A673 (cell line): ENCODE measurements at regions of chr6 and their contacts with region 1.

Region 1: GRCh38 chr6:157281570-157281969 is 41.7 kb downstream of the TMEM242 start:
- DNase-seq: peak; percentile 35
- H3K4me3 ChIP-seq: no peak overlapping the region
- H3K27ac ChIP-seq: no peak overlapping the region
- H3K4me1 ChIP-seq: no peaks in the 10 kb centered on the region
- H3K27me3 ChIP-seq: no peaks in the 10 kb centered on the region
- CTCF ChIP-seq: peak; percentile 46

Region 2: DNA sequence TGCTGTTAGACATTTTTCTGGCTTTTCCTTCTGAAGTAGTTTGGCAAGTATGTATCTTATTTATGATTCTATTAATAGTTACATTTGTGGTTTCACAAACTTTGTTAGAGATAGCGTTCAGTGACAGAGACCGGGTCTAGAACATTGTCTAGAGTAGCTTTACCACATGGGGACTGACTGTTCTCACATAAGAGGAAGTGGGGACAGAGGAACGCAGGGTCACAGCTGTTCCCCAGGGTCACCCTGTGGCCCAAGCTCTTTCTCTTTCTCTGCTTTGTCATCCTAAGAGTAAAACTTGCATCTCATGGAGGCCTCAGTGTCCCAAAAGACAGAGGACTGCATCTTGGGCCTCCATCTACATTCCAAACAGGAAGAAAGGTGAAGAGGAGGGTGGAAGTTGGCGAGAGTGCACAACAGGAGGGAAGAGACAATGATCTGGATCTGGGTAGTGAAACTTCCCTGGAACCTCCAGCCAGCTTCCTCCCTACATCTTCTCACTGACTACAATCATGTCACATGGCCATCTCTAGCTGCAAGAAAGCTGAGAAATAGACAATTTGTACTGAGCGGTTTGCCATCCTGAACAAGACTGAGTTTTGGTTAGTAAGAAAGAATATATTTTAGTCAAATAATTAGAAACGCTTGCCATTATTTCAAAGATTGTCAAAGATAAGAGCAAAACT is 1150.2 kb before region 1 on chr6:
- CTCF ChIA-PET with region 1: no interaction called
- POLR2A ChIA-PET with region 1: no interaction called
- intact Hi-C with region 1: no loop called
- DNase-seq: no peak
- H3K4me3 ChIP-seq: no peak overlapping the region
- H3K27ac ChIP-seq: no peak overlapping the region
- H3K4me1 ChIP-seq: no peaks in the 10 kb centered on the region
- H3K27me3 ChIP-seq: no peaks in the 10 kb centered on the region
- CTCF ChIP-seq: no peak

Region 3: DNA sequence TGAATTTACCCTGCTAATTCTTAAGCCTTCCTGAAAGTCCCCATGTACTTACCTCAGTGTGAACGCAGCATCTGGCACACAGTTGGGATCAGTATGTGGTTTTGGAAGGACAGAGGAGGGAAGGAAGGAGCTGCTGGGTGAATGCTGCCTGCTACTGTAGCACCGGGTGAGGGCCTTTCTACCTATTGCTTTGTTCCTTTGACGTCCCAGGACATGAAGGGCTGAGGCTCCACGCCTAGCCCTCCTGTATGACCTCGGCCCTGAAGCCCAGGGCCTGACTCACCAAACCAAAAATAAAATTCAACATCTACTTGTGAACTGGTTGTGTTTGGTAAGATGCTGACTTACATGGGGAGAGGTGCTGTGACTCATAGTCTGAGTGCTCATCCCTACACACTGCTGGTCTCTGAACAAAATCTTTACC is 453.3 kb before region 1 on chr6:
- CTCF ChIA-PET with region 1: interaction called, 11 read pairs
- POLR2A ChIA-PET with region 1: no interaction called
- intact Hi-C with region 1: no loop called
- DNase-seq: no peak
- H3K4me3 ChIP-seq: no peak overlapping the region
- H3K27ac ChIP-seq: no peak overlapping the region
- H3K4me1 ChIP-seq: peaks cover 36% of the 10 kb centered on the region
- H3K27me3 ChIP-seq: no peaks in the 10 kb centered on the region
- CTCF ChIP-seq: no peak

Region 4: DNA sequence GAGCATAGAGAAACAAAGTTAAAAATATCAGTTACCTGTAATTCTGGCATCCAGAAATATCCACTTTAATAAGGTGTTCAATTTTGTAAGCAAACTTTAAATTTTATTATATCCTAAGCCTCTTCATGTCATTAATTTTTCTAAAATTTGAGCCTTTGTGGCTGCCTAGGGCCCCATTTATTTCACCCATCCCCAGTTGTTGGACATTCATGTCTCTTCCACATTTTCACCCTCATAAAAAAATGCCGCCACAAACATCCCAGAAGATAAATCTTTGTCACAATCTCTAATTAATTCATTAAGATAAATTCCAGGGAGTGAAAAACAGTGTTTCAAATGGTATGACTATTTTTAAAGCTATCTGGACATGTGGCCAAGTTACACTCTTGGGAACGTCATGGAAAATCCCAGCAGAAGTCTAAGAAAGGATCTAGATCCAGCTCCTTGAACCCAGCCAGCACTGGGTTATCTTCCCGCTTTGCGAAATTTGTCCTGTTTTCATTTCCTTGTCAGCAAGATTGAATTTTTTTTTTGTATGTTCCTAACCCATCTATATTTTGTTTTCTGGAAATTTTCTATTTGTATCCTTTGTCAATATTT is 55.4 kb before region 1 on chr6:
- CTCF ChIA-PET with region 1: interaction called, 16 read pairs
- POLR2A ChIA-PET with region 1: no interaction called
- intact Hi-C with region 1: no loop called
- DNase-seq: no peak
- H3K4me3 ChIP-seq: no peak overlapping the region
- H3K27ac ChIP-seq: no peak overlapping the region
- H3K4me1 ChIP-seq: no peaks in the 10 kb centered on the region
- H3K27me3 ChIP-seq: no peaks in the 10 kb centered on the region
- CTCF ChIP-seq: no peak

Region 5: DNA sequence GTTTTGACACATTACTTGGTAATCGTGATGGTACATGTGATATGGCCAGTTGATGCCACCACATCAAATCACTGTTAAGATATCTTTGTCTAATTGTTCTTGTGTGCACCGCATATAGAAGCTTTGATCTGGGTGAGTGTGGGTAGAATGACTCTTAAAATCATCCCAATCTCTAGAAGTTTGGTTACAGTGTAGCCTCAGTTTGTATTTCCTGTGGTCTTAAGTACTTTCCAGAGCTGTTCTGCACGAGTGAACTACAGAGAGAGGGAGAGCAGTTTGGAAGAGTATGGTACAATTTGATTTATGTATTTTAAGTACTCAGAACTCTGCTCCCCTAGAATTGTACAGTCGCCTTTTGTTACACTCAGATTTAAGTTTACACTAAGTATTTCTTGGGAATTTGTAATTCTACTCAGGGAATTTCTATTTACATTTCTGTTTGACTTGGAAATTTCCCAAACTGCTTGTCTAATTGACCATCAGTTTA is 579.0 kb after region 1 on chr6:
- CTCF ChIA-PET with region 1: no interaction called
- POLR2A ChIA-PET with region 1: interaction called, 13 read pairs
- intact Hi-C with region 1: no loop called
- DNase-seq: peak; percentile 18
- H3K4me3 ChIP-seq: no peak overlapping the region
- H3K27ac ChIP-seq: no peak overlapping the region
- H3K4me1 ChIP-seq: peaks cover 28% of the 10 kb centered on the region
- H3K27me3 ChIP-seq: no peaks in the 10 kb centered on the region
- CTCF ChIP-seq: no peak